GM13976 (cell line): ENCODE measurements at regions of chr12 and their contacts with region 1.

Region 1: GRCh38 chr12:119432949-119433348 is 98.4 kb downstream of the CCDC60 start:
- DNase-seq: no peak
- CTCF ChIP-seq: no peak

Region 2: DNA sequence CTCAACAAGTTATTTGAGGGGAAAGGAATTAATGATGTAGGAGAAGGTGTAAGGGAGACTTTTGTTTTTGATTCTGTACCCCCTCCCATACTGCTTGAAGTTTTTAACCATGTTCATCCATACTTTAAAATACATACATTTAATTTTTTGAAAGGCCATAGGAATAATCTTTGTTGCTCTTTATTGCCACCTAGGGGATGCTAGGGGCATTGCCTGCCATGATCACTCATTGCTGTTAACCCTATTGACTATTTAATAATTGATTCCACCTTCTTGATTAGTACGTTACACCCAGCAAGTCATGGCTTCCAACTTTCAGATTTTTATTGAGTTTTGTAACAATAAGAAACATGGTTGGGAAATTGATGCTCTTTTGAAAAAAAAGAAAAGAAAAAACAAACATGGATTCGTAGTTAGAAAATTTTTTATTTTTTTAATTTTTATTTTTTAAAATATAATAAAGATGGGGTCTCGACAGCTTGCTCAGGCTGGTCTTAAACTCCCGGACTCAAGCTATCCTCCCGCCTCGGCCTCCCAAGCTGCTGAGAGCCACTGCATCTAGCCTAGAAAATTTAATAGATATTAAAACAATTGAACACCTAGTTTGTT is 226.4 kb after region 1 on chr12:
- in situ Hi-C with region 1: loop called (anchors 10 kb)
- DNase-seq: peak; percentile 66
- CTCF ChIP-seq: peak; percentile 86